A549 (cell line): ENCODE measurements at regions of chr16 and their contacts with region 1.

Region 1: GRCh38 chr16:89700100-89700648 is 1.3 kb downstream of the SPATA2L start:
- DNase-seq: peak; percentile 93 to 99
- ATAC-seq: peak; percentile 49 to 76
- H3K4me3 ChIP-seq: peak overlapping the region; percentile 69
- H3K27ac ChIP-seq: peak overlapping the region; percentile 82 to 92
- H3K4me1 ChIP-seq: peaks cover 12% of the 10 kb centered on the region
- CTCF ChIP-seq: peak; percentile 69
- EP300 ChIP-seq: no peak
- POLR2A ChIP-seq: no peak
- RAD21 ChIP-seq: peak; percentile 63 to 71

Region 2: GRCh38 chr16:89686520-89687091 is 13.6 kb before region 1 on chr16 and contains the start of gene CDK10:
- CTCF ChIA-PET with region 1: interaction called, 33 read pairs
- POLR2A ChIA-PET with region 1: interaction called, 26 read pairs
- DNase-seq: peak; percentile 87 to 89
- ATAC-seq: peak; percentile 81 to 89
- H3K4me3 ChIP-seq: peak within 1 kb of the TSS; percentile 70
- H3K27ac ChIP-seq: peak within 1 kb of the TSS; percentile 96 to 99
- H3K4me1 ChIP-seq: peaks cover 11% of the 10 kb centered on the region
- CTCF ChIP-seq: no peak
- EP300 ChIP-seq: no peak
- POLR2A ChIP-seq: peak; percentile 93
- RAD21 ChIP-seq: no peak
- polyA plus RNA-seq, gene CDK10: 35.9 and 40.2 TPM in 2 replicates

Region 3: DNA sequence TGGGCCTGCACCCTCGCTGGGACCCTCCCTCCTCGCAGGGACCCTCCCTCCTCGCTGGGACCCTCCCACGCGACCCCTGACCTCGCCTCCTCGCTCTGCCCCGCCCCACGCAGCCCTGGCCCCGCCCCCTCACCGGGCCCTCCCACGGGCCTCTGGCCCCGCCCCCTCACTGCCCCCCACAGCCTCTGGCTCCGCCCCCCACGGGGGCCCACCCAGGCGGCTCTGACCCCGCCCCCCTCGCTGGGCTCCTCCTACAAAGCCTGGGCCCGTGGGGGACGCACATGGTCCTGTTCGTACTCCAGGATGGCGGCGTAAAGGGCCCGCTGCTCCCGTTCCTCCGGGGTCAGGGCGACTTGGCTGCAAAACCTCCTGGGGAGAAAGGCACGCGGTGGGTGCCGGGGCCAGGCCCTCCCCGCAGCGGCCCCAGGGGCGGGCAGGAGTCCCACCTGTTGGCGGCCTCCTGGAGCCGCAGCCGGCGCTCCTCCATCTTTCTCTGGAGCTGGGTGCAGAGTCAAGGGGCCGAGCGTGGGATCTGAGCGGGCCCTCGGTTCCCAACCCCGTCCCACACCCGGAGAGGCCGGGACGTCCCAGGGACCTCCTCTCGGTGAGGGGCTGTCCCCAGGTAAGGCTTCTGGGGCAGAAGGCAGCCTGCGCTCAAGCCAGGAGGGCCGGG is 11.6 kb after region 1 on chr16:
- CTCF ChIA-PET with region 1: interaction called, 77 read pairs
- POLR2A ChIA-PET with region 1: interaction called, 6 read pairs
- DNase-seq: peak; percentile 81 to 94
- ATAC-seq: peak; percentile 57 to 82
- H3K4me3 ChIP-seq: peak overlapping the region; percentile 87
- H3K27ac ChIP-seq: peak overlapping the region; percentile 86 to 89
- H3K4me1 ChIP-seq: peaks cover 9% of the 10 kb centered on the region; the same call in 2 of the 3 replicates
- CTCF ChIP-seq: no peak
- EP300 ChIP-seq: no peak
- POLR2A ChIP-seq: peak; percentile 81
- RAD21 ChIP-seq: no peak

Region 4: DNA sequence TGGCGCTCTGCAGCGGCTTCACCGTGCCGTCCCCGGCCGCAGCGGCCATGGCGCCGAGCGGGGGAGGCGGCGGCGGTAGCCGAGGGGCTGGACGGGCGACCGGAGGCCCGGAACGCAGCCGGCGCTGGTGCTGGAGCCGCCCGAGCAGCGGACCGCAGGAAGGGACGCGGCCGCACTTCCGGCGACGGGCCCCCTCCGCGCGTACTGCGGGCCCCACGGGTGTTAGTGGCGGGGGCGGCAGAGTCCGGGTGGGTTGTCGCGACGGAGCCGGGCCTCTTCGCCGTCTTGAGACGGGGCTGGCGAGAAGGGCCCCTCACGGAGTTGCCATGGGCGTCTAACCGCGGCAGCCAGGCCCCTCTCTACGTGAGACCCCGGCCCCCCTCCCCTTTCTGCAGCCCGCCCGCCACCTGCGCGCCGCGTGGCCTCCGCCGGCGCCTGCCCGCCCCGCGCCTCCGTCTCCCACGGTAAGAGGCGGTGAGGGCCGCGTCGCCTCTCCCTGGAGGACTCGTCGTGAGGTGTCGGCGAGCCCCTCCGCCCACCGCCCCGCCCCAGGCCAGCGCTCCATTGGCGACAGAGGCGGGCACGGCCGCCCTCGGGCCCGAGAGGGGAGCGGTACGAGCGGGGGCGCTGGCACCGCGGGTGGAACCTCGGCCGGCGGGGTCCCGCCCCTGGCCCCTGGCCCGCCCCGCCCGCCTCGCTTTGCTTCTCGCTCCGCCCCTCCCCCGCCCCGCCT is 20.8 kb after region 1 on chr16 and contains the starts of genes VPS9D1 and ZNF276:
- CTCF ChIA-PET with region 1: interaction called, 77 read pairs
- POLR2A ChIA-PET with region 1: no interaction called
- DNase-seq: peak; percentile 66 to 85
- ATAC-seq: peak; percentile 70 to 74
- H3K4me3 ChIP-seq: peak within 1 kb of the TSS; percentile 94
- H3K27ac ChIP-seq: peak within 1 kb of the TSS; percentile 96 to 99
- H3K4me1 ChIP-seq: peaks cover 32% of the 10 kb centered on the region
- CTCF ChIP-seq: no peak
- EP300 ChIP-seq: no peak
- POLR2A ChIP-seq: peak; percentile 58
- RAD21 ChIP-seq: no peak
- polyA plus RNA-seq, gene VPS9D1: 2.1 and 2.7 TPM in 2 replicates
- polyA plus RNA-seq, gene ZNF276: 6.5 and 7.5 TPM in 2 replicates

Region 5: GRCh38 chr16:89784406-89784805 is 84.2 kb after region 1 on chr16:
- CTCF ChIA-PET with region 1: no interaction called
- POLR2A ChIA-PET with region 1: no interaction called
- DNase-seq: no peak
- ATAC-seq: no peak
- H3K4me3 ChIP-seq: no peak overlapping the region
- H3K27ac ChIP-seq: no peak overlapping the region
- H3K4me1 ChIP-seq: no peaks in the 10 kb centered on the region
- CTCF ChIP-seq: no peak
- EP300 ChIP-seq: no peak
- POLR2A ChIP-seq: no peak
- RAD21 ChIP-seq: no peak

Region 6: DNA sequence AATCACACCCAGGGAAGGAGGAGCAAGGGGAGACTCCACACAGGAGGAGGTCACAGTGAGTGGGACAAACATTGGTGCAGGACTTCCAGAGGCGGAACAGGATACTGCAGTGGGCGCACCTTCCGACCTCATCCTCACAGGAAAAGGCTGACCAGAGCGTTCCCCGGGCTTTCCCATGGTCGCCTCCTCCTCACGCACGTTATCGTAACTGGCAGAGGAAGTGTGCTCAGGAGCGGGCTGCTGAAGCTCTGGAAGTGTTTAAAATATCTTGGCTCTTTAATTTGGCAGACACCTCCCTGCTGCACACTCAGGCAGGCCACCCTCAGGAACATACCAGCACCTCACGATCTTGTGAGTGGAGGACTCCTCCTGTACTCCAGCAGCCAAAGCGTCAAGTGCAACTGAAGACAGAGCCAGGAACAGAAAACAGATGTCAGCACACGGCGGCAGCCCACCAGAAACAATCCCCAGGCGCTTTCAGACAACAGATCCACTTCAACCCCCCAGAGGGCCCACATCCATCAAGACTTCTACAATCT is 98.7 kb after region 1 on chr16:
- CTCF ChIA-PET with region 1: interaction called, 70 read pairs
- POLR2A ChIA-PET with region 1: no interaction called
- DNase-seq: no peak
- ATAC-seq: peak in 1 of 2 experiments; percentile 30; a peak in 2 of 6 replicates
- H3K4me3 ChIP-seq: no peak overlapping the region
- H3K27ac ChIP-seq: no peak overlapping the region
- H3K4me1 ChIP-seq: no peaks in the 10 kb centered on the region
- CTCF ChIP-seq: no peak
- EP300 ChIP-seq: no peak
- POLR2A ChIP-seq: no peak
- RAD21 ChIP-seq: no peak